PC-3 (cell line): ENCODE measurements at regions of chr4 and their contacts with region 1.

Region 1: DNA sequence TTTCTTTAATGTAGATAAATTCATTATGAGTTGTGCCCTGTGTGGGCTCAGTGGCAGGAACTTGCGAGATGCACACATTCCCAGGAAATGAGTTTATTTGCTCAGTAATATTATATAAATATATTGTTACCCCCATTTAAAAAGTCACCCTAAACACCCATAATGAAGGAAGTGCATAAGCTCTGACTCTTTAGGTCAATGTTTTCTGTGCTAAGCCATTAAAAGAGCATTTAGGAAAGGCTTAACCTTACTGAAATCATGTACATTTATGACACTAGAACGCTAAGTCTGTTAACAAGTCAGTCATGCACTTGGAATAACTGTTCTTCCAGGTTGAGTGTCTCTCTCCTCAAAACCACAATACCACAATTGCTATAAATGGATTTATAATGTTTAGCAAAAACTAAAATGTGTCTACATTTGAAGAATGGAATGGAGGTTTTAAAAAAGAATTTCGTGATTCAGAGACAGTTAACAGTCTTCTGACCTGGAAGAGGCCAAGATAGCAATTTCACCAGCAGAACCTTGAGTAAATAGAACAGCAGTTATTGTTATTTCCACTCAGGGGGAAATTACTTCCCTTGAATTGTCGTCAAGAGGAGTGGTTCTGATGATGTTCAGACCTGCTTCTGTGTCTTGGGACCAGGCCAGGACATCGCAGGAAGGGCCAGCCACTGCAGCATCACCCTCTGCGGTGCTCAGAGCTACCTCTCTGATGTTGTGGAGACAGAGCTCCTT is 91.1 kb upstream of the VEGFC start:
- DNase-seq: peak; percentile 93
- ATAC-seq: peak; percentile 77
- H3K4me3 ChIP-seq: peak overlapping the region; percentile 36
- H3K27ac ChIP-seq: peak overlapping the region; percentile 99
- H3K4me1 ChIP-seq: peaks cover 44% of the 10 kb centered on the region
- H3K27me3 ChIP-seq: no peaks in the 10 kb centered on the region
- CTCF ChIP-seq: no peak

Region 2: GRCh38 chr4:176499518-176499917 is 384.3 kb before region 1 on chr4:
- CTCF ChIA-PET with region 1: no interaction called
- POLR2A ChIA-PET with region 1: no interaction called
- intact Hi-C with region 1: loop called (anchors 5 kb)
- DNase-seq: peak; percentile 92
- ATAC-seq: peak; percentile 81
- H3K4me3 ChIP-seq: peak overlapping the region; percentile 48
- H3K27ac ChIP-seq: peak overlapping the region; percentile 91
- H3K4me1 ChIP-seq: peaks cover 14% of the 10 kb centered on the region
- H3K27me3 ChIP-seq: no peaks in the 10 kb centered on the region
- CTCF ChIP-seq: no peak

Region 3: DNA sequence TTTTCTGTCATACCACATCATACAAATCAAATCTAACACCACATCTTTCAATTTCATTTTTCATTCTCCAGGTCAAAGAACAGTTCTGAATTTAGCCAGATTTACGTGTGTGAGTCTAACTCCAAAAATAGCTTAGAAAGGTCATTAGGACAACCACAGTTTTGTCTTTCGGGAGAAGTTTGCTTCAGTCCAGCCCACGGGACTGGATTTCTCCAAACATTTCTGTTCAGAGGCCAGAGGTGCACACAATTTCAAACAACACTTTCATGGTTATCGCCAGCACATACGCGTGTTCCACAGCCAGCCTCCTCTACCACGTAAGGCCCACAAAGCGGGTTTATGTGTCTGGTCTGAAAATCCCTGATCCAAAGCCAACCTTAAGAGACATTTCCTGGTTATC is 157.0 kb before region 1 on chr4:
- CTCF ChIA-PET with region 1: no interaction called
- POLR2A ChIA-PET with region 1: no interaction called
- intact Hi-C with region 1: no loop called
- DNase-seq: no peak
- ATAC-seq: no peak
- H3K4me3 ChIP-seq: no peak overlapping the region
- H3K27ac ChIP-seq: no peak overlapping the region
- H3K4me1 ChIP-seq: no peaks in the 10 kb centered on the region
- H3K27me3 ChIP-seq: no peaks in the 10 kb centered on the region
- CTCF ChIP-seq: no peak

Region 4: DNA sequence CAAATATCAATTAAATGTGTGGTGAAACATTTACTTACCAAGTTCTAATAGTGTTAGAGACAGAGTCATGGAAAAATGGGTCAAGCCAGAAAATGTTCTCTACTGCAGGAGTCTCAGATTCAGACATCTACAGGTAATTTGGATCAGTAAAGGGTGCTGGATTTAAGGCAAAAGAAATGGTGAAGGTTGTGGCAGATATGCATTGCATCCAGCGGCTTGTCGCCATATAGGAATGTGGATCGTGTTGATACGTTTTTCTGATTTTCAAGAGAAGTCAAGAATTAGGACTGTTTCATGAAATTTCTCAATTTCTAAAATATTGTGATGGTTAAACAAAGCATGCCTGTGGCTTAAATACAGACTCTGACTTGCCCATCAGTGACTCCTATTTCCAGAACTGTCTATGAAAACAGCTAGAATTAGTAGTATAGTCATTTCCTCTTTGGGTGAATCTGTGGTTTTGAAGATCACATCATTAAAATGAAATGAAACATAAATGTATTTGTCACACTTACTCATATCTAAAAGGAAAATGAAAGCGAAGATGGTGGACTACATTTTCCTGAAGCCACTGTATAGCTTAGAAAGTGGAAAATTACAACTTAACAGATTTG is 19.0 kb after region 1 on chr4:
- CTCF ChIA-PET with region 1: interaction called, 3 read pairs
- POLR2A ChIA-PET with region 1: interaction called, 4 read pairs
- intact Hi-C with region 1: loop called (anchors 1 kb)
- DNase-seq: peak; percentile 80
- ATAC-seq: peak; percentile 69
- H3K4me3 ChIP-seq: peak overlapping the region; percentile 9; the same call in 1 of the 2 replicates
- H3K27ac ChIP-seq: peak overlapping the region; percentile 94
- H3K4me1 ChIP-seq: peaks cover 41% of the 10 kb centered on the region
- H3K27me3 ChIP-seq: no peaks in the 10 kb centered on the region
- CTCF ChIP-seq: no peak

Region 5: DNA sequence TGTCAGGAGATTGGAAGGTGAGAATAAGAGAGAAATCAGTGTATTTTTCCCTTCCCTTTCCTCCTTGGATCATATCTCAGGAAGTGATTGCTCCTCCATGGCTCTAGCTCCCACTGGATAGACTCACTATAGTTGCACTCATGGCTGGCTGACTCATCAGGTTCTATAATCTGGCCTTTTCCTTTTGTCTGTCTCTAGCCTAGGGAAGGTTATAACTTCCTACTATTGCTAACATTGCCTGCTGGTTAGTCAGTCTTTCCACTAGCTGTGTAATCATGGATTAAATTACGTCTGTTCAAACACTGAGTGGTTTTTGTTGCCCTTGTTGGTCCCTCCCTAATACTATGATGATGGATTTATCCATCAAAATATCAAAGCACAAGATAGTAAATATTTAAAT is 104.4 kb after region 1 on chr4:
- CTCF ChIA-PET with region 1: no interaction called
- POLR2A ChIA-PET with region 1: no interaction called
- intact Hi-C with region 1: loop called (anchors 1 kb)
- DNase-seq: peak; percentile 96
- ATAC-seq: peak; percentile 100
- H3K4me3 ChIP-seq: no peak overlapping the region
- H3K27ac ChIP-seq: peak overlapping the region; percentile 97
- H3K4me1 ChIP-seq: peaks cover 19% of the 10 kb centered on the region
- H3K27me3 ChIP-seq: no peaks in the 10 kb centered on the region
- CTCF ChIP-seq: no peak

Region 6: GRCh38 chr4:177047070-177047850 is 163.4 kb after region 1 on chr4:
- CTCF ChIA-PET with region 1: no interaction called
- POLR2A ChIA-PET with region 1: no interaction called
- intact Hi-C with region 1: loop called (anchors 1 kb)
- DNase-seq: peak; percentile 78
- ATAC-seq: peak; percentile 96
- H3K4me3 ChIP-seq: no peak overlapping the region
- H3K27ac ChIP-seq: peak overlapping the region; percentile 76
- H3K4me1 ChIP-seq: peaks cover 13% of the 10 kb centered on the region
- H3K27me3 ChIP-seq: no peaks in the 10 kb centered on the region
- CTCF ChIP-seq: peak; percentile 84